AG04450 (cell line): ENCODE measurements at regions of chr16 and their contacts with region 1.

Region 1: DNA sequence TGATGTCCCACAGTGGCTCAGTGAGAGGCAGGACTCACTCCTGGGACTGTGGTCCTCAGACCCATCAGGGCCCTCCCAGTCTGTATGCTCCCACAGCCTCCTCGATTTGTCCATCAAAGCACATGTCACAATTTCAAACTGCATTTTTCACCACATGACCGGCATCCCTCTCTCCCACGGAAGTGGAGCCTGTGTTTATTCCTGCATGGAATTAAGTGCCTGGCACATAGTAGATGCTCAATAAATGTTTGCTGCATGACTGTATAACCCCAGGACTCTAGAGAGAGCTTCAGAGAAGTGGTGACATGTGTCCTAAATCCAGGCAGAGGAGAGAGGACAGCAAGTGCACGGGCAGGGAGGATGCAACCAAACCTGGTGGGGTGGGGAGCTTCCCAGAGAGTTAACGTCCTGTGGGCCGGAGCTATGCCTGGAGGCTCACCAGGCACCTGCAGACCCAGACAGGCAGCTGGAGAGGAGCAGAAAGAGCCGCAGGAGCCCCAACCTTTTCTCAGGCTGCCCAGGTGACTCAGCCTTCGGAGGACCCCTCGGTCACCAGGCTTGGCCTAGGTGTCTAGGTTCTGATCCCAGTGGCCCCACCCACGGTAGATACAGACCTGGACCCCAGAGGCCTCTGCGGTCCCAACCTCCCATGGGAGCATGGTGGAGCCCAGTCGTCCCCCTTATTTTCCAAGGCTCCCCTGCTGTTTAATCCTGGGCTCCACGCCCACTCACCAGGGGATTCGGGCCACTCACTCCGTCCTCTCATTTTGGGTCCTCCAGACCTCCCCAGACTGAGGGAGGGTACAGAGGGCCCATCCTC is 5.8 kb downstream of the CDH5 start:
- DNase-seq: no peak
- H3K4me3 ChIP-seq: no peak overlapping the region
- H3K27ac ChIP-seq: no peak overlapping the region
- H3K27me3 ChIP-seq: peaks cover 20% of the 10 kb centered on the region
- CTCF ChIP-seq: no peak

Region 2: GRCh38 chr16:66357153-66357928 is 14.9 kb before region 1 on chr16:
- CTCF ChIA-PET with region 1: interaction called, 49 read pairs
- POLR2A ChIA-PET with region 1: interaction called, 10 read pairs
- DNase-seq: peak; percentile 62
- H3K4me3 ChIP-seq: no peak overlapping the region
- H3K27ac ChIP-seq: no peak overlapping the region
- H3K27me3 ChIP-seq: peaks cover 45% of the 10 kb centered on the region
- CTCF ChIP-seq: peak; percentile 80

Region 3: DNA sequence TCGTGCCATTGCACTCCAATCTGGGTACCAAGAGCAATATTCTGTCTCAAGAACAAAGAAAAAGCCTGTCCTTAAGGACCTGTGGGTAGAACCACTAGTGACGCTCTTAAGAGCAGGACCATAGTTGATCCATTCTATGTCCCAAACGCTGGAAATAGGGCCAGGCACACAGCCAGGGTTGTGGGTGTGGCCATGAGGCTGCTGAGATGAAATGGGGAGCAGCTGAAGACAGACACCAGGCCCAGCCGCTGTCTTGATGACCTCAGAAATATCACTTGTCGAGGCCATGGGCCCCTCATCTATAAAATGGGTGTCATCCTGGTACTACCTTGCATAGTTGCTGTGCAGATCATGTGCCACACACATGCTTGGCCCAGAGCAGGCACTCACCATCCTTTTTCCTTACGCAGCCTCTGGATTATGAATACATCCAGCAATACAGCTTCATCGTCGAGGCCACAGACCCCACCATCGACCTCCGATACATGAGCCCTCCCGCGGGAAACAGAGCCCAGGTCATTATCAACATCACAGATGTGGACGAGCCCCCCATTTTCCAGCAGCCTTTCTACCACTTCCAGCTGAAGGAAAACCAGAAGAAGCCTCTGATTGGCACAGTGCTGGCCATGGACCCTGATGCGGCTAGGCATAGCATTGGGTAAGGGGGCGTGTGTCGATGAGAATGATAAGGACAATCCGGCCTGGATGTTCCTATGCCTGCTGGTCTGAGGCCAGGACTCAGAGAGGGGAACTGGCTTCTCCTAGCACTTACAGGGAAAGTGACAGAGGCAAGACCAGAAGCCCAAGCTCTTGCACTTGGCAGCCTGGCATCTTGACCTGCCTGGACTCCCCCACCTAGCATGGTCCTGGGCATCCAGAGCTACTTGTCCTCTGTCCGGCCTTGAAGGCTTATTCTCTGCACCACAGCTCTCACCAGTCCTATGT is 19.7 kb after region 1 on chr16:
- CTCF ChIA-PET with region 1: no interaction called
- POLR2A ChIA-PET with region 1: no interaction called
- DNase-seq: no peak
- H3K4me3 ChIP-seq: no peak overlapping the region
- H3K27ac ChIP-seq: no peak overlapping the region
- H3K27me3 ChIP-seq: peaks cover 35% of the 10 kb centered on the region
- CTCF ChIP-seq: no peak